ENCODE measurements at regions of chr3 and their contacts with region 1.

Region 1: DNA sequence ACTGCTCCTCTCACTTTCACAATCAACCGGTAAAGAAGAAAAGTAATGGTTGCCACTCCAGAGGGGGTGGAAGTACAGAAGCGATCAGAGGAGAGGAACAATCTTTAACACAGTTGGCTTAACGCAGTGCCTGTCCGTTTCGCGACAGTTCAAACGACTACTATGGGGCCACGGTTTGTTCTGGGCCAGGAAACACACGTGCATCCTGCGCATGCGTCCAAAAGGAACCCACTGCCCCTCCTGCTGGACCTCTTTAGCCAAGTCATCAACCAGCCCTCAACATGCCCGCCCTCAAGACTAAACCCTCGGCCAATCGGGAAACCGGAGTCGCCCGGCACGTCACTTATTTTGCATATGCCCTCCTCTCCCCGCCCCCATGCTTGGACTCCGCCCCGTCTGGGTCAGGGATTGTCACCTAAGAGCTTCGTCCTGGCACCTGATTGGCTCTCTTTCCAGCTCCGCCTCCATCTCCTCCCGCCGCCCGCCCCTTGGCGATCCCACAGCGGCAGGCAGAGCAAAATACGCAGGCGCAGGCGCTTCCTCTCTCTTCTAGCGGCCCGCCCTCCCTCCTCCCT is 345 bp upstream of the CDV3 start:
- DNase-seq: peak; percentile 100
- ATAC-seq: peak; percentile 86
- H3K4me3 Mint-ChIP-seq: peak overlapping the region; percentile 82
- H3K27ac Mint-ChIP-seq: peak overlapping the region; percentile 99
- H3K4me1 Mint-ChIP-seq: peaks cover 50% of the 10 kb centered on the region
- H3K27me3 Mint-ChIP-seq: no peaks in the 10 kb centered on the region

Region 2: GRCh38 chr3:133441867-133442270 is 131.3 kb before region 1 on chr3:
- CTCF ChIA-PET with region 1: interaction called, 13 read pairs
- POLR2A ChIA-PET with region 1: interaction called, 8 read pairs
- DNase-seq: peak; percentile 43
- ATAC-seq: peak; percentile 92
- H3K4me3 Mint-ChIP-seq: peak overlapping the region; percentile 70
- H3K27ac Mint-ChIP-seq: peak overlapping the region; percentile 93
- H3K4me1 Mint-ChIP-seq: peaks cover 23% of the 10 kb centered on the region
- H3K27me3 Mint-ChIP-seq: no peaks in the 10 kb centered on the region

Region 3: GRCh38 chr3:133475245-133476010 is 97.7 kb before region 1 on chr3:
- CTCF ChIA-PET with region 1: interaction called, 9 read pairs
- POLR2A ChIA-PET with region 1: interaction called, 13 read pairs
- DNase-seq: peak; percentile 50
- ATAC-seq: peak; percentile 91
- H3K4me3 Mint-ChIP-seq: no peak overlapping the region
- H3K27ac Mint-ChIP-seq: peak overlapping the region; percentile 53
- H3K4me1 Mint-ChIP-seq: peaks cover 57% of the 10 kb centered on the region
- H3K27me3 Mint-ChIP-seq: no peaks in the 10 kb centered on the region

Region 4: GRCh38 chr3:133506215-133506901 is 66.8 kb before region 1 on chr3:
- CTCF ChIA-PET with region 1: interaction called, 4 read pairs
- POLR2A ChIA-PET with region 1: interaction called, 19 read pairs
- DNase-seq: peak; percentile 62
- ATAC-seq: peak; percentile 98
- H3K4me3 Mint-ChIP-seq: peak overlapping the region; percentile 52
- H3K27ac Mint-ChIP-seq: peak overlapping the region; percentile 92
- H3K4me1 Mint-ChIP-seq: peaks cover 18% of the 10 kb centered on the region
- H3K27me3 Mint-ChIP-seq: no peaks in the 10 kb centered on the region

Region 5: GRCh38 chr3:133661454-133662277 is 88.5 kb after region 1 on chr3 and contains the start of gene TOPBP1:
- CTCF ChIA-PET with region 1: interaction called, 5 read pairs
- POLR2A ChIA-PET with region 1: interaction called, 13 read pairs
- DNase-seq: peak; percentile 93
- ATAC-seq: peak; percentile 90
- H3K4me3 Mint-ChIP-seq: peak within 1 kb of the TSS; percentile 98
- H3K27ac Mint-ChIP-seq: peak within 1 kb of the TSS; percentile 99
- H3K4me1 Mint-ChIP-seq: peaks cover 36% of the 10 kb centered on the region
- H3K27me3 Mint-ChIP-seq: no peaks in the 10 kb centered on the region
- total RNA-seq, gene TOPBP1: 96.1 to 98.7 TPM